Left ventricle myocardium inferior (tissue), 1 donor: ENCODE measurements at regions of chr19 and their contacts with region 1.

Region 1: GRCh38 chr19:57099199-57099661 is 20.6 kb upstream of the USP29 start:
- DNase-seq: peak; percentile 72
- H3K4me3 ChIP-seq: no peak overlapping the region
- H3K27ac ChIP-seq: no peak overlapping the region
- H3K4me1 ChIP-seq: peaks cover 3% of the 10 kb centered on the region
- H3K27me3 ChIP-seq: peaks cover 39% of the 10 kb centered on the region
- CTCF ChIP-seq: peak; percentile 91

Region 2: GRCh38 chr19:56748378-56748777 is 350.9 kb before region 1 on chr19:
- intact Hi-C with region 1: loop called (anchors 5 kb)
- DNase-seq: no peak
- H3K4me3 ChIP-seq: no peak overlapping the region
- H3K27ac ChIP-seq: no peak overlapping the region
- H3K4me1 ChIP-seq: no peaks in the 10 kb centered on the region
- H3K27me3 ChIP-seq: peaks cover 24% of the 10 kb centered on the region
- CTCF ChIP-seq: peak; percentile 69